GM12878 (cell line): ENCODE measurements at regions of chr11 and their contacts with region 1.

Region 1: DNA sequence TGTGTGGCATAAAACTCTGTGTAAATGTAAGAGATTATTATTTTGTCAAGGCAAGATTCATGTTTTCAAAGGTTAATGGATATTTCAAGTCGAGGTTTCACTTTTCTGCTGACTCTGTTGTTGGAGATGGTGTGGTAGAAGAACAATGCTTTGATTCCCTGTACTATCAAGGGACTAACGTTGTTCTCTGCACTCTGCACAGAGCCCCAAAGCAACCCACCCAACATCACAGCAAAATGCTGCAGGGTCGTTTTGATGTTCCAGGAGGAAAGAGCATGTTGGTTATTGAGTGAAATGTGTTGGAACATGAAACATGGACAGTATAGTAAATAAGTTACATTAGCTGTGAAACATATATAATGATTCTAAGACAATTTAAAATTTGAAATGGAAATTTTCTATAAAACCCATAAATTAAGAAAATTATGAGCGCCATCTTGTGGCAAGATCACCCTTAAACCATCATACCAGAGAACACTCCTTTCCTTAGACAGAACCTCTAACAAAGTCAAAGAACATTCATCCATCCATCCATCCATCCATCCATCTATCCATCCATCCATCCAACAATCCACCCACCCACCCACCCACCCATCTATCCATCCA is 164.4 kb upstream of the ZBED5 start:
- DNase-seq: no peak
- ATAC-seq: peak; percentile 58; the same call in 2 of the 3 replicates
- H3K4me3 ChIP-seq: no peak overlapping the region
- H3K27ac ChIP-seq: no peak overlapping the region
- H3K4me1 ChIP-seq: no peaks in the 10 kb centered on the region
- H3K27me3 ChIP-seq: peaks cover 0 to 2% of the 10 kb centered on the region in 2 experiments; a peak in 1 of 4 replicates
- CTCF ChIP-seq: peak; percentile 20 to 46 (median 31); a peak in 3 of 6 replicates
- EP300 ChIP-seq: no peak
- POLR2A ChIP-seq: no peak
- RAD21 ChIP-seq: peak; percentile 38

Region 2: GRCh38 chr11:10943968-10944367 is 78.3 kb before region 1 on chr11:
- CTCF ChIA-PET with region 1: interaction called, 15 read pairs
- POLR2A ChIA-PET with region 1: no interaction called
- RAD21 ChIA-PET with region 1: no interaction called
- SMC1A ChIA-PET with region 1: interaction called, 4 read pairs
- in situ Hi-C with region 1: no loop called
- intact Hi-C with region 1: no loop called
- DNase-seq: no peak
- ATAC-seq: no peak
- H3K4me3 ChIP-seq: no peak overlapping the region
- H3K27ac ChIP-seq: no peak overlapping the region
- H3K4me1 ChIP-seq: no peaks in the 10 kb centered on the region
- H3K27me3 ChIP-seq: no peaks in the 10 kb centered on the region; a peak in 2 of 4 replicates
- CTCF ChIP-seq: no peak
- EP300 ChIP-seq: no peak
- POLR2A ChIP-seq: no peak
- RAD21 ChIP-seq: no peak

Region 3: DNA sequence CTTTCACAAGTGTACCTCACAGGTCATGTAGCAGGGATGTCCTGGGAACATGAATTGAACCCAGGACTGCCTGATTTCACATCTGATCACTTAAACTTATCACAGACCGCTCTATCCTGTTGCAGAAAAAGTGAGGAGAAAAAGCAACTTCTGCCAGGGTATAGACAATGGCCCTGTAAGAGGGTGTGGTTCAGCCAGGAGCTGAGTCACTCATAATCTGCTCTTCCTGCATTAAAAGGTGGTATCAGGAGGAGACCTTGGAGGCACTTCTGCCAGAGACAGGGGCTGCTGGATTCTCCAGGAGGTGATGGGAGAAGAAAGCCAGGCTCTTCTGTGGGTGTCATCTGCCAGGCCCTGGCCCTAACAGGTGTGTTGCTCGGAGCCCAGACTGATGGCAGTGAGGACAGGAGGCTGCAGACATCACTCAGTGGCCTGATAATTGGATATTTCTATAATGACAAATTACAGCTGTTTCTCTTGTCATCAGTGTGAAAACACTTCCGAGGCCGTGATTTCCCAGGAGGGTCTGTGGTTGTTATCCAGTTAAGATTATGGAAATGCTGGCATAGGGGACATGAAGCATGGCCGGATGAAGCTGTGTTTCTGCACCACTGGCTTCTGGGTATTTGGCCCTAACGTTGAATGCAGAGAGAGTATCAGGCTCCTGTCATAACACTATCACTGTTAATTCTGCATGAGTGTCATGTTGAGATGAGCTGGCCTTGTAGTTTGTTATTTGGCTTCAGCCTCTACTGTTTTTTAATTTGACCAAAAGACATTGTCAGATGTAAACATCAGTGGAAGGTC is 39.3 kb before region 1 on chr11:
- CTCF ChIA-PET with region 1: no interaction called
- POLR2A ChIA-PET with region 1: no interaction called
- RAD21 ChIA-PET with region 1: no interaction called
- SMC1A ChIA-PET with region 1: no interaction called
- in situ Hi-C with region 1: no loop called
- intact Hi-C with region 1: no loop called
- DNase-seq: no peak
- ATAC-seq: no peak
- H3K4me3 ChIP-seq: no peak overlapping the region
- H3K27ac ChIP-seq: no peak overlapping the region
- H3K4me1 ChIP-seq: 0 out of 2 replicates have a peak, but pooled peaks cover 4% of the 10 kb centered on the region
- H3K27me3 ChIP-seq: no peaks in the 10 kb centered on the region
- CTCF ChIP-seq: no peak
- EP300 ChIP-seq: no peak
- POLR2A ChIP-seq: no peak
- RAD21 ChIP-seq: no peak

Region 4: GRCh38 chr11:11186249-11186648 is 164.0 kb after region 1 on chr11:
- CTCF ChIA-PET with region 1: no interaction called
- POLR2A ChIA-PET with region 1: no interaction called
- RAD21 ChIA-PET with region 1: no interaction called
- SMC1A ChIA-PET with region 1: no interaction called
- in situ Hi-C with region 1: no loop called
- intact Hi-C with region 1: no loop called
- DNase-seq: peak; percentile 19
- ATAC-seq: peak; percentile 63
- H3K4me3 ChIP-seq: no peak overlapping the region
- H3K27ac ChIP-seq: no peak overlapping the region
- H3K4me1 ChIP-seq: no peaks in the 10 kb centered on the region; the same call in 1 of the 2 replicates
- H3K27me3 ChIP-seq: no peaks in the 10 kb centered on the region
- CTCF ChIP-seq: no peak
- EP300 ChIP-seq: no peak
- POLR2A ChIP-seq: no peak
- RAD21 ChIP-seq: no peak